ENCODE measurements at regions of chr1 and their contacts with region 1.

Region 1: DNA sequence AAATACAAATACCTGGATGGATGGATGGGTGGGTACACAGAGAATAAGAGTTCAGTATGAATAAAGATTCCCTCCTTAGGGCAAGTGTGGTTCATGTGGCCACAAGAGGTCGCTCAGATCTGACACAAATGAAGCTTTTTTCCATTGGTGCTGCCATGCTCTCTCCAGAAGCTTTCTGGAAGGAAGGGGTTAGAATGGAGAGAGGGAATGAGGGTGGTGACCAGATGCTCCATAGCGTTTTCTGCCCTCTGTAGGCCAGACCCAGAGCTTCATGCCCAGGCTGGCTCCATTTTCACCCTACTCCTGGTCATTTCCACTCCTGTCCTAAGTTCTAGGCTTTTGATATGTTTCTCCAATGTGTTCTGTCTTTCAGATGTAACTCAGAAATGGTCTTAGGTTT is 3.3 kb upstream of the FCRL6 start:
- DNase-seq: peak; percentile 85
- H3K4me3 ChIP-seq: no peak overlapping the region
- H3K27ac ChIP-seq: no peak overlapping the region
- H3K4me1 ChIP-seq: no peaks in the 10 kb centered on the region
- H3K27me3 ChIP-seq: no peaks in the 10 kb centered on the region
- CTCF ChIP-seq: peak; percentile 75 to 77
- POLR2A ChIP-seq: no peak

Region 2: GRCh38 chr1:159132271-159132881 is 666.5 kb before region 1 on chr1:
- CTCF ChIA-PET with region 1: interaction called, 72 read pairs
- POLR2A ChIA-PET with region 1: no interaction called
- dilution Hi-C with region 1: no loop called
- intact Hi-C with region 1: loop called (anchors 1 kb)
- DNase-seq: peak; percentile 68
- H3K4me3 ChIP-seq: no peak overlapping the region
- H3K27ac ChIP-seq: no peak overlapping the region
- H3K4me1 ChIP-seq: no peaks in the 10 kb centered on the region
- H3K27me3 ChIP-seq: peaks cover 15 to 16% of the 10 kb centered on the region in 2 experiments
- CTCF ChIP-seq: peak; percentile 76 to 89
- POLR2A ChIP-seq: no peak

Region 3: GRCh38 chr1:159171254-159171687 is 627.6 kb before region 1 on chr1 and contains the start of gene CADM3:
- CTCF ChIA-PET with region 1: no interaction called
- POLR2A ChIA-PET with region 1: no interaction called
- dilution Hi-C with region 1: no loop called
- intact Hi-C with region 1: no loop called
- DNase-seq: no peak
- H3K4me3 ChIP-seq: peak within 1 kb of the TSS in 1 of 3 experiments; percentile 18
- H3K27ac ChIP-seq: no peak within 1 kb of the TSS
- H3K4me1 ChIP-seq: no peaks in the 10 kb centered on the region
- H3K27me3 ChIP-seq: peaks cover 49 to 57% of the 10 kb centered on the region in 2 experiments
- CTCF ChIP-seq: no peak
- POLR2A ChIP-seq: no peak
- total RNA-seq, gene CADM3: 2.7 and 4.1 TPM in 2 replicates

Region 4: GRCh38 chr1:159207774-159208173 is 591.1 kb before region 1 on chr1:
- CTCF ChIA-PET with region 1: interaction called, 23 read pairs
- POLR2A ChIA-PET with region 1: no interaction called
- dilution Hi-C with region 1: no loop called
- intact Hi-C with region 1: no loop called
- DNase-seq: no peak
- H3K4me3 ChIP-seq: no peak overlapping the region
- H3K27ac ChIP-seq: no peak overlapping the region
- H3K4me1 ChIP-seq: peaks cover 12% of the 10 kb centered on the region
- H3K27me3 ChIP-seq: peaks cover 0 to 2% of the 10 kb centered on the region in 2 experiments
- CTCF ChIP-seq: no peak
- POLR2A ChIP-seq: no peak

Region 5: GRCh38 chr1:159780583-159781582 is 18.0 kb before region 1 on chr1 and contains the start of gene DUSP23:
- CTCF ChIA-PET with region 1: interaction called, 65 read pairs
- POLR2A ChIA-PET with region 1: no interaction called
- dilution Hi-C with region 1: no loop called
- intact Hi-C with region 1: loop called (anchors 1 kb)
- DNase-seq: peak; percentile 100
- H3K4me3 ChIP-seq: peak within 1 kb of the TSS; percentile 35 to 80 (median 62)
- H3K27ac ChIP-seq: peak within 1 kb of the TSS; percentile 92
- H3K4me1 ChIP-seq: peaks cover 46% of the 10 kb centered on the region
- H3K27me3 ChIP-seq: no peaks in the 10 kb centered on the region
- CTCF ChIP-seq: peak; percentile 90 to 97
- POLR2A ChIP-seq: peak; percentile 10
- total RNA-seq, gene DUSP23: 82.5 and 126 TPM in 2 replicates

Region 6: GRCh38 chr1:159854693-159855192 is 55.9 kb after region 1 on chr1:
- CTCF ChIA-PET with region 1: interaction called, 32 read pairs
- POLR2A ChIA-PET with region 1: no interaction called
- dilution Hi-C with region 1: no loop called
- intact Hi-C with region 1: loop called (anchors 1 kb)
- DNase-seq: peak; percentile 78
- H3K4me3 ChIP-seq: peak overlapping the region; percentile 54 to 60 (median 57)
- H3K27ac ChIP-seq: peak overlapping the region; percentile 24
- H3K4me1 ChIP-seq: peaks cover 16% of the 10 kb centered on the region
- H3K27me3 ChIP-seq: no peaks in the 10 kb centered on the region
- CTCF ChIP-seq: no peak
- POLR2A ChIP-seq: peak; percentile 51

Region 7: DNA sequence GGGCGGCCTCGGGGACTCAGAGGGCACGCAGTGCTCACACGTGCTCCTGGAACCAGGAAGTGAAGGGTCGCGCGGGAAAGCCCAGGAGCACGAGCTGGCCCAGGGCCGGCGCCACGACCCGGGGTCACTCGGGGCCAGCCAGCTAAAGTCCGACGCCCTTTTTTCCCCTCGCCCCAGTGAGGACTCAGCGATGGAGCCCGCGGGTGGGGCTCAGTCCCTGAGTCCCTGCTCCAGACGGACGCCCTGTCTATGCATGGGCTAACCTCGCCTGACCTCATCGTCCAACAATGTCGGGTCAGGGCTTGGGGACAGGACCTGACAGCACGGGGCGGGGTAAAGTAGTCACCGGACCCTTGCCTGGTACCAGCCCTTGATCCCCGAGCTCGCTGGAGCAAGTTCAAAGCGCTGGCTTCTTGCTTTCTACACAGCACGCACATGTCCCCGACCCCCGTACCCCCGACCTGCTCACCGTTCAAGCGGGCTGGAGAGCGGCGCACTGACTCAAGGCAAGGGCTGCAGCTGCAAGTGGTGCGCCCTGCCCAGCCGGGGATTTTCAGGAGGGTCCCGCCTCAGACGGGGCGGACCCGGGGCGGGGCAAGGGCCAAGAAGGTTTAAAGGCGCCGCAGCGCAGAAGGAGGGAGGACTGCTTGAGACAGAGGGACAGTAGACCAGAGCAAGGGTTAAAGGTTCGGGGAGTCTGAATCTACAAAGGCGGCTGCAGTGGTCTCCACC is 126.3 kb after region 1 on chr1 and contains the start of gene TAGLN2:
- CTCF ChIA-PET with region 1: interaction called, 15 read pairs
- POLR2A ChIA-PET with region 1: no interaction called
- dilution Hi-C with region 1: no loop called
- intact Hi-C with region 1: no loop called
- DNase-seq: peak; percentile 93
- H3K4me3 ChIP-seq: peak within 1 kb of the TSS; percentile 46 to 78 (median 71)
- H3K27ac ChIP-seq: peak within 1 kb of the TSS; percentile 98
- H3K4me1 ChIP-seq: peaks cover 27% of the 10 kb centered on the region
- H3K27me3 ChIP-seq: no peaks in the 10 kb centered on the region
- CTCF ChIP-seq: no peak
- POLR2A ChIP-seq: peak; percentile 98
- total RNA-seq, gene TAGLN2: 646 and 750 TPM in 2 replicates

Region 8: GRCh38 chr1:160006312-160006940 is 207.5 kb after region 1 on chr1:
- CTCF ChIA-PET with region 1: interaction called, 121 read pairs
- POLR2A ChIA-PET with region 1: no interaction called
- dilution Hi-C with region 1: no loop called
- intact Hi-C with region 1: loop called (anchors 1 kb)
- DNase-seq: peak; percentile 55
- H3K4me3 ChIP-seq: no peak overlapping the region
- H3K27ac ChIP-seq: no peak overlapping the region
- H3K4me1 ChIP-seq: no peaks in the 10 kb centered on the region
- H3K27me3 ChIP-seq: peaks cover 16 to 19% of the 10 kb centered on the region in 2 experiments
- CTCF ChIP-seq: peak; percentile 86 to 91
- POLR2A ChIP-seq: no peak